ENCODE measurements at regions of chr17 and their contacts with region 1.

Region 1: GRCh38 chr17:38454516-38454915 is 26.3 kb downstream of the ARHGAP23 start:
- DNase-seq: peak; percentile 81 to 99 (median 94)

Region 2: GRCh38 chr17:38464723-38465390 is 10.3 kb after region 1 on chr17:
- intact Hi-C with region 1: loop called (anchors 1 kb)
- DNase-seq: peak; percentile 74 to 99 (median 88)

Region 3: DNA sequence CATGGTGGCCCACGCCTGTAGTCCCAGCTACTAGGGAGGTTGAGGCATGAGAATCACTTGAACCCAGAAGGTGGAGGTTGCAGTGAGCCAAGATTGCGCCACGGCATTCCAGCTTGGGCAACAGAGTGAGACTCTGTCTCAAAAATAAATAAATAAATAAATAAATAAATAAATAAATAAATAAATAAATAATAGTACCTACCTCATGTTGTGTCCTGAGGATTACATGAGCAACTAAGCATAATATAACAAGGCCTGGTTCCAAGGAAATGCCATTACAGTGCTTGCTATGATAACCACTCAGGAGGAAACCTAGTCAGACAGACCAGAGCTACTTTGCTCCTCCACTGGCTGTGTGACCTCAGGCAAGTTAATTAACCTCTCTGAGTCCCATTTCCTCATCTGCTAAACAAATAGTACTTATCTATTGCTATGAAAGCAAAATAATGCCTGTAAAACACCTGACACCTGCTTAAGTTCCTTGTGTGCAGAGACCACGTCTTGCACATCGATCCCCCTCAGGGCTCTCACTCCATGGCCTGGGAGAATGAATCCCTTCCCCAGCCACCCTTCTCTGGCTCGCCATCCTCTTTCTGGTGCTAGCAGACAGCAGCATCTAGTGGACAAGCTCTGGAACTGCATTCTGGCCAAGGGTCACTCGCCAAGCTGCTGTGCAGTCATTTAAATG is 212.7 kb after region 1 on chr17:
- intact Hi-C with region 1: no loop called
- DNase-seq: peak; percentile 35 to 95 (median 73)

Measured in posterior cingulate gyrus (tissue), 11 donors.